ENCODE measurements at regions of chr14 and their contacts with region 1.

Region 1: DNA sequence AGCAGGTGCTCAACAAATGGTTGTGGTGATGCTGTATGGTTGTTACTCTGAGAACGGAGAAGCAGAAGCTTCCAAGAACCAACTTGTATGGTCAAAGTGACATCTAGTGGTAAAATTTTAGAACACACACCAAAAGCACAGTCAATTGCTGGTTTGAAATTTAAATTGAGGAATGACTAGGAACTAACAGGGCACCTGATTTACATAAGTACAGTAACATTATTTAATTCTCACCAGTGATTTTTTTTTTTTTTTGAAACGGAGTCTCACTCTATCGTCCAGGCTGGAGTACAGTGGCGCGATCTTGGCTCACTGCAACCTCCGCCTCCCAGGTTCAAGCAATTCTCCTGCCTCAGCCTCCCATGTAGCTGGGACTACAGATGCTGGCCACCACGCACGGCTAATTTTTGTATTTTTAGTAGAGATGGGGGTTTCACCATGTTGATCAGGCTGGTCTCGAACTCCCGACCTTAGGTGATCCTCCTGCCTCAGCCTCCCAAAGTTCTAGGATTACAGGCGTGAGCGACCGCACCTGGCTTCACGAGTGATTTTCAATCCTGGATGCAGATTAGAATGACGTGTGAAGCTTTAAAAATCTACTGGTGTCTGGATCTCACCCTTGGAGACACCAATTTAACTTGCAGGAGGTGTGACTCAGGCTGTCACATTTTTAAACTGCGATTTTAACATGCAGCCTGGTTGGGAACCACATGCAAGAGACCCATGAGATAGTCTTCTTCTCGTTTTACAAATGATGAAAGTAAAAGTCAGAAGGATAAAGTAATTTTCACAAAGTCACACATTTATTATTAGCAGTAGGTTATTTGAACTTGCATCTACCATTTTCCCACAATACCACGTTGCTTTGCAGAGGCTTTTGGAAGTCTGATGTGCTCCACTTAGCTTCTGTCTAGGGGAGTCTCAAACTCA is 14.1 kb upstream of the NUMB start:
- DNase-seq: peak; percentile 64 to 79 (median 75)
- H3K4me3 ChIP-seq: no peak overlapping the region
- H3K4me3 Mint-ChIP-seq: no peak overlapping the region
- H3K27ac ChIP-seq: no peak overlapping the region
- H3K27ac Mint-ChIP-seq: peak overlapping the region in 2 of 7 donors; percentile 32 to 59
- H3K4me1 ChIP-seq: peaks cover 15 to 40% of the 10 kb centered on the region in 2 donors
- H3K4me1 Mint-ChIP-seq: peaks cover 30% of the 10 kb centered on the region
- H3K27me3 ChIP-seq: no peaks in the 10 kb centered on the region
- H3K27me3 Mint-ChIP-seq: peaks cover 0 to 3% (median 0%) of the 10 kb centered on the region in 3 donors
- CTCF ChIP-seq: peak; percentile 79

Region 2: GRCh38 chr14:73295198-73295796 is 177.2 kb before region 1 on chr14:
- intact Hi-C with region 1: loop called (anchors 5 kb)
- DNase-seq: peak in 2 of 3 donors; percentile 20 to 48
- H3K4me3 ChIP-seq: no peak overlapping the region
- H3K4me3 Mint-ChIP-seq: no peak overlapping the region
- H3K27ac ChIP-seq: no peak overlapping the region
- H3K27ac Mint-ChIP-seq: no peak overlapping the region
- H3K4me1 ChIP-seq: no peaks in the 10 kb centered on the region
- H3K4me1 Mint-ChIP-seq: no peaks in the 10 kb centered on the region
- H3K27me3 ChIP-seq: no peaks in the 10 kb centered on the region
- H3K27me3 Mint-ChIP-seq: peaks cover 0 to 1% (median 0%) of the 10 kb centered on the region in 3 donors
- CTCF ChIP-seq: peak; percentile 73

Region 3: DNA sequence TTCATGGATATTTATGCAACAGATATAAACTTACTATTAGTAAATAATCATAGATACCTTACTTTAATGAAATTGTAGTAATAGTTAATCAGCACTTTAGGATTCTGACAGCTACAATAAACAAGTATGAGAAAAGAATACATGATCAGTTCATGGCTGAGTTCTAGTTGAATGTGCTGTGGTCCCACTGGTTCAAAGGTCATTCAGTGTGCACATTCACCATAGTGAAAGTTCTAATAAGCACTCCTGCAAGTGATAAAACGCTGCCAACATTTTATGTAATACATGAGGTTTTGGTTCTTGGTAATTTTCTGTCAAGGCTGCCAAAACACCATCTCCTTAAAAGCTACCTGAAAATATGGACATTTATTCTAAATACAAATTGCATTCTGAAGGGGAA is 106.7 kb before region 1 on chr14:
- intact Hi-C with region 1: loop called in 1 of 2 experiments (anchors 10 kb)
- DNase-seq: no peak
- H3K4me3 ChIP-seq: no peak overlapping the region
- H3K4me3 Mint-ChIP-seq: no peak overlapping the region
- H3K27ac ChIP-seq: no peak overlapping the region
- H3K27ac Mint-ChIP-seq: no peak overlapping the region
- H3K4me1 ChIP-seq: peaks cover 3 to 16% of the 10 kb centered on the region in 2 donors
- H3K4me1 Mint-ChIP-seq: peaks cover 11% of the 10 kb centered on the region
- H3K27me3 ChIP-seq: no peaks in the 10 kb centered on the region
- H3K27me3 Mint-ChIP-seq: no peaks in the 10 kb centered on the region
- CTCF ChIP-seq: no peak

Region 4: DNA sequence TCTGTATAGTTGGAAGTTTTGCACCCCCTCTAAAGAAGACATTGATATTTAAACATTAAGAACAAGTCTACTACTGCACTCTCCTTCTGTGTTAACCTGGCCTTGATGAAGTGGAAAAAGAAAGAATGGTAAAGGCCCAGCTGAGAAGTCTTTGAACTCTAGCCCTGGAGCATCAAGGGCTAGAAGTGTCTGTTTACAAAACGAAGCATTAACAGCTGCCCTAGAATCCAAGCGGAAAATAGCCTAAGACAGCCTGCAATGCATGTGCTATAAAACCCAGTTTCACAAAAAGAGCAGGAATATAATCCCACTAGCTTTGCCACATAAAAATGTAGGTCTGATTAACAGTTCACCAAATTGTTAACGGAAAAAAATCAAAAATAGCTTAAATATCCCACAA is 74.6 kb before region 1 on chr14:
- intact Hi-C with region 1: no loop called
- DNase-seq: no peak
- H3K4me3 ChIP-seq: no peak overlapping the region
- H3K4me3 Mint-ChIP-seq: no peak overlapping the region
- H3K27ac ChIP-seq: no peak overlapping the region
- H3K27ac Mint-ChIP-seq: peak overlapping the region in 1 of 7 donors; percentile 32
- H3K4me1 ChIP-seq: no peaks in the 10 kb centered on the region
- H3K4me1 Mint-ChIP-seq: peaks cover 2% of the 10 kb centered on the region
- H3K27me3 ChIP-seq: no peaks in the 10 kb centered on the region
- H3K27me3 Mint-ChIP-seq: no peaks in the 10 kb centered on the region
- CTCF ChIP-seq: no peak

Region 5: GRCh38 chr14:73418227-73418626 is 54.2 kb before region 1 on chr14:
- intact Hi-C with region 1: loop called (anchors 5 to 10 kb)
- DNase-seq: no peak
- H3K4me3 ChIP-seq: no peak overlapping the region
- H3K4me3 Mint-ChIP-seq: no peak overlapping the region
- H3K27ac ChIP-seq: peak overlapping the region in 1 of 2 donors; percentile 24
- H3K27ac Mint-ChIP-seq: peak overlapping the region in 5 of 7 donors; percentile 18 to 77 (median 56)
- H3K4me1 ChIP-seq: peaks cover 27 to 46% of the 10 kb centered on the region in 2 donors
- H3K4me1 Mint-ChIP-seq: peaks cover 55% of the 10 kb centered on the region
- H3K27me3 ChIP-seq: no peaks in the 10 kb centered on the region
- H3K27me3 Mint-ChIP-seq: no peaks in the 10 kb centered on the region
- CTCF ChIP-seq: no peak

Region 6: GRCh38 chr14:73457575-73458150 is 14.8 kb before region 1 on chr14:
- intact Hi-C with region 1: loop called in 1 of 2 experiments (anchors 2 kb)
- DNase-seq: peak in 2 of 3 donors; percentile 30 to 64
- H3K4me3 ChIP-seq: peak overlapping the region; percentile 93 to 99 (median 99)
- H3K4me3 Mint-ChIP-seq: peak overlapping the region; percentile 93 to 100
- H3K27ac ChIP-seq: peak overlapping the region; percentile 71 to 92
- H3K27ac Mint-ChIP-seq: peak overlapping the region; percentile 94 to 100 (median 99)
- H3K4me1 ChIP-seq: peaks cover 57 to 80% of the 10 kb centered on the region in 2 donors
- H3K4me1 Mint-ChIP-seq: peaks cover 74% of the 10 kb centered on the region
- H3K27me3 ChIP-seq: no peaks in the 10 kb centered on the region
- H3K27me3 Mint-ChIP-seq: peaks cover 0 to 3% (median 0%) of the 10 kb centered on the region in 3 donors
- CTCF ChIP-seq: no peak

Measured in CD14-positive monocyte (primary cell).